WTC11 (cell line): ENCODE measurements at regions of chr10 and their contacts with region 1.

Region 1: GRCh38 chr10:71608819-71609768 is 110.5 kb downstream of the C10orf105 start:
- DNase-seq: peak; percentile 93
- ATAC-seq: peak; percentile 75
- H3K4me3 Mint-ChIP-seq: no peak overlapping the region
- H3K27ac Mint-ChIP-seq: no peak overlapping the region
- H3K4me1 Mint-ChIP-seq: peaks cover 53% of the 10 kb centered on the region
- H3K27me3 Mint-ChIP-seq: no peaks in the 10 kb centered on the region
- CTCF ChIP-seq: peak; percentile 67

Region 2: GRCh38 chr10:71597821-71598498 is 11.1 kb before region 1 on chr10:
- CTCF ChIA-PET with region 1: interaction called, 16 read pairs
- POLR2A ChIA-PET with region 1: no interaction called
- DNase-seq: no peak
- ATAC-seq: peak; percentile 43; the same call in 1 of the 2 replicates
- H3K4me3 Mint-ChIP-seq: no peak overlapping the region
- H3K27ac Mint-ChIP-seq: no peak overlapping the region
- H3K4me1 Mint-ChIP-seq: 0 out of 2 replicates have a peak, but pooled peaks cover 4% of the 10 kb centered on the region
- H3K27me3 Mint-ChIP-seq: no peaks in the 10 kb centered on the region
- CTCF ChIP-seq: no peak

Region 3: GRCh38 chr10:71725249-71725648 is 116.2 kb after region 1 on chr10:
- CTCF ChIA-PET with region 1: no interaction called
- POLR2A ChIA-PET with region 1: no interaction called
- DNase-seq: no peak
- ATAC-seq: no peak
- H3K4me3 Mint-ChIP-seq: no peak overlapping the region
- H3K27ac Mint-ChIP-seq: no peak overlapping the region
- H3K4me1 Mint-ChIP-seq: peaks cover 2% of the 10 kb centered on the region; the same call in 1 of the 2 replicates
- H3K27me3 Mint-ChIP-seq: peaks cover 3% of the 10 kb centered on the region; the same call in 1 of the 2 replicates
- CTCF ChIP-seq: no peak

Region 4: DNA sequence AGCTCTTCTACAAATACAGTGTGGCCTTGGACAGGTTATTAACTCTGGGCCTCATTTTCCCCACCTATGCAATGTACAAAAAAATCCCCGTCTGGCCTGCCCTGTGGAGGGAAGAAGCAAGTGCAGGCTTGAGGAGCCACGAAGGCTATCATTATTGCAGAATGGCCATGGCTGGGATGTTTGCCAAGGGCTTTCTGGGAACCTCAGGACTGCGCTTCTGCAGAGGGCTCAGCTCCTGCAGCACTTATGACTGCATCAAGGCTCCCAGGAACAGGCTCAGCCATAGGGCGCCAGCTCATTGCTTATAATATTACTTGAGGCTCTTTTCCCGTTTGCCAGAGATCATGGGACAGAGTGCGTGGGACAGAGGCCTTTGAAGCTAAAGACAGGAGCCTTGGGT is 131.0 kb after region 1 on chr10:
- CTCF ChIA-PET with region 1: no interaction called
- POLR2A ChIA-PET with region 1: no interaction called
- DNase-seq: no peak
- ATAC-seq: no peak
- H3K4me3 Mint-ChIP-seq: no peak overlapping the region
- H3K27ac Mint-ChIP-seq: no peak overlapping the region
- H3K4me1 Mint-ChIP-seq: peaks cover 10% of the 10 kb centered on the region
- H3K27me3 Mint-ChIP-seq: peaks cover 3% of the 10 kb centered on the region; the same call in 1 of the 2 replicates
- CTCF ChIP-seq: no peak

Region 5: GRCh38 chr10:71860243-71861029 is 251.3 kb after region 1 on chr10:
- CTCF ChIA-PET with region 1: no interaction called
- POLR2A ChIA-PET with region 1: no interaction called
- DNase-seq: peak; percentile 71
- ATAC-seq: peak; percentile 95
- H3K4me3 Mint-ChIP-seq: no peak overlapping the region
- H3K27ac Mint-ChIP-seq: peak overlapping the region; percentile 93; the same call in 1 of the 2 replicates
- H3K4me1 Mint-ChIP-seq: peaks cover 14% of the 10 kb centered on the region
- H3K27me3 Mint-ChIP-seq: no peaks in the 10 kb centered on the region
- CTCF ChIP-seq: no peak

Region 6: DNA sequence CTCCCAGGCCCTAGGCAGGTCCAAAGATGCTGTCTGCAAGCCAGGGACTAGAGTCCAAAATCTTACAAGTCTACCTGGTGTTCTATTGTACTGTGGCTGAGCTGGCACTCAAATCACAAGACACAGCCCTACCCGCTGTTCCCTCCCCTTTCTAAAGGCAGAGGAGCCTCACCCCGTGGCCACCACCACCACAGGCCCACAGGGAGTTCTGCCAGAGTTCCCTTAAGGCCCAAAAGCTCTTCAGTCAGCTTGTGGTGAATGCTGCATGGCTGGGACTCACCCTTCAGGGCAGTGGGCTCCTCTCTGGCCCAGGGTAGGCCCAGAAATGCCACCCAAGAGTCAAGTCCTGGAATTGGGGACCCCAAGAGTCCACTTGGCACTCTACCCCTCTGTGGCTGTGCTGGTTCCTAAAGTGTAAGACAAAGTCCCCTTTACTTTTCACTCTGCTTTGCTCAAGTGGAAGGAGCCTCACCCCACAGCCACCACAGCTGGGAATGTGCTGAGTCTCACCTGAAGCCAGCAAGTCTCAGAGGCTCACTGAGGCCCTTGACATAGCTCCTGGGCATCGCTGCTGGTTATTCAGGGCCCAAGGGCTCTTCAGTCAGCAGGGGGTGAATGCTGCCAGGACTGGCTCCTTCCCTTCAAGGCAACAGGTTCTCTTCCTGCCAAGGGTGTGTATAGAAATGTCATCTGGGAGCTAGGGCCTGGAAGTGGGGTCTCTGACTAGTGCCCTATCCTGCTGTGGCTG is 290.7 kb after region 1 on chr10:
- CTCF ChIA-PET with region 1: no interaction called
- POLR2A ChIA-PET with region 1: no interaction called
- DNase-seq: no peak
- ATAC-seq: no peak
- H3K4me3 Mint-ChIP-seq: no peak overlapping the region
- H3K27ac Mint-ChIP-seq: no peak overlapping the region
- H3K4me1 Mint-ChIP-seq: no peaks in the 10 kb centered on the region
- H3K27me3 Mint-ChIP-seq: no peaks in the 10 kb centered on the region
- CTCF ChIP-seq: no peak